Activated B cell treated with CpG ODN at 0.5 μM for 24 hours (primary cell): ENCODE measurements at regions of chr7 and their contacts with region 1.

Region 1: GRCh38 chr7:103344453-103345149 is at the start of gene DNAJC2:
- DNase-seq: peak; percentile 65
- ATAC-seq: peak; percentile 90
- H3K4me3 Mint-ChIP-seq: peak within 1 kb of the TSS; percentile 99
- H3K27ac Mint-ChIP-seq: peak within 1 kb of the TSS; percentile 94
- H3K4me1 Mint-ChIP-seq: peaks cover 60% of the 10 kb centered on the region
- H3K27me3 Mint-ChIP-seq: no peaks in the 10 kb centered on the region
- CTCF ChIP-seq: no peak
- total RNA-seq, gene DNAJC2: 45.8 and 49.0 TPM in 2 replicates

Region 2: GRCh38 chr7:103074519-103075336 is 269.9 kb before region 1 on chr7 and contains the starts of genes ARMC10 and FBXL13:
- CTCF ChIA-PET with region 1: no interaction called
- POLR2A ChIA-PET with region 1: no interaction called
- intact Hi-C with region 1: loop called (anchors 10 kb)
- DNase-seq: peak; percentile 95
- ATAC-seq: peak; percentile 85
- H3K4me3 Mint-ChIP-seq: peak within 1 kb of the TSS; percentile 94
- H3K27ac Mint-ChIP-seq: peak within 1 kb of the TSS; percentile 95
- H3K4me1 Mint-ChIP-seq: peaks cover 41% of the 10 kb centered on the region
- H3K27me3 Mint-ChIP-seq: no peaks in the 10 kb centered on the region
- CTCF ChIP-seq: no peak
- total RNA-seq, gene ARMC10: 24.9 and 26.7 TPM in 2 replicates
- total RNA-seq, gene FBXL13: 2.9 and 3.4 TPM in 2 replicates

Region 3: DNA sequence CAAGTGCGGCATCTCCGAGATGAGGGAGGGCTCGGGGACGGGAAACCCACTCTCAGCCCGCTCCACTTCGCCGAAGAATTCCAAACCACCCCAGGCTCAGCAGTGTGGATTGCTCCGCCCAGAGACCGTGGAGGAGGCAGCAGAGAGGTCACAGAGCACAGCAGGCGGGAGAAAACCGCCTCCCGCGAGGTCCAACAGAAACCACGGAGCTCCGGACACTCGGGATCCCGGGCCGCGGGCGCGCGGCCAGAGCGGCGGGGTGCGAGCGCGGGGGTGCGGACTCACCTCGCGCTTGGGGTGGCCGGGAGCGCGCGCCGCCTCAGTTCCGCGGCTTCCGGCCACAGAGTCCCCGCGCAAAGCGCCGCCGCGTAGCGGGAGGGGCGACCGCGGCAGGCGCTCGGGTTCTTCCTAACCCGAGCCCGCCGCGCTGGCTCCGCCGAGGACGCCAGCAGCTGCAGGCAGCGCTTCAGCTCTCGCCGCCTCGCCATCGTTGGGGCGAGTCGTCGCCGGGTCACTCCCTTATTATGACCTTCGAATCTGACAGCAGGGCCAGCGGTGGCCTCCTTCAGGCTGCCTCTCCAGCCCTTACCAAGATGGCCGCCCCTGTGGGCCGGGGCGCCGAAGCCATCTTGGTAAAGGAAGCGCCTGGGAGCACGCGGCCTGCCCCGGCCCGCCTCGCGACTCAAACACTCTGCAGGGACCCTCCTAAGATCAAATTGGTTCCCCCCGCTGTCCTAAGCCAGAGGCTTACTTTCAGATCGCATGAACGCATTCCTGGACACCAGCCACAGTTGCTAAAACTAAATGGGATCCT is 195.4 kb before region 1 on chr7 and contains the start of gene NAPEPLD:
- CTCF ChIA-PET with region 1: no interaction called
- POLR2A ChIA-PET with region 1: no interaction called
- intact Hi-C with region 1: loop called (anchors 2 kb)
- DNase-seq: peak; percentile 81
- ATAC-seq: peak; percentile 86
- H3K4me3 Mint-ChIP-seq: peak within 1 kb of the TSS; percentile 98
- H3K27ac Mint-ChIP-seq: peak within 1 kb of the TSS; percentile 96
- H3K4me1 Mint-ChIP-seq: peaks cover 40% of the 10 kb centered on the region
- H3K27me3 Mint-ChIP-seq: no peaks in the 10 kb centered on the region
- CTCF ChIP-seq: no peak
- total RNA-seq, gene NAPEPLD: 14.4 and 15.4 TPM in 2 replicates

Region 4: DNA sequence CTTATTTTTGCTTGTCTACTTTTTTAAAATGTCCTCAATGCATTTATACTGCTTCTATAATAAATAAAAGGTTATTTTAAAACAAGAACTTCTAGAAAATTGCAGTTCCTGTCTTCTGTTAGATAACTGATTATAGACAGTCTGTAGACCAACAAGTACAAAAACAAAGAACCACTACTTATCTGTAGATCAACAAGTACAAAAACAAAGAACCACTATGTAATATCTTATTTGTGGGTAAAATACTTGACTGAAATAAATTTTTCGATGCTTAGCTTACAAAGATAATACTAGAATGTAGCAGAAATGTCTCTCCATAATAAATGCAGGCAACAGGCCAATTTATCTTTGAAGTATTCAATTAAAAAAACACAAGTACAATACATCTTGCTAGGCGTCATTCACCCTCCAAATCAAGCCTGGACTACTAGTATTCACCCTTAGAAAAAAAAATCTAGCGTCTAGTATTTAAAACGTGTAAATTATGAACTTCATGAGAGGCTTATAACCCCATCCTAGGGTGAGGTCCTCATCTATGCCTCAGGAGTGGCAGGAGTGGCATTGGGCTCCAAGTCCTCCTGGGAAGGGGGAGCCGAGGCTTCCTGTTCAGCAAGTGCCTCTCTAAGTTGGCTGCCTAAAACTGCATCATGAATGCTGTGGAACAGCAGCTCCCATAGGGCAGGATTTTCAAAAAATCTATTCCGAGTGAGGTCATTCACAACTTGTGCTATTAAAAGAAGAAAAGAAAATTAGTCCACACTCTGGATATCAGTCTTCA is 29.5 kb after region 1 on chr7:
- CTCF ChIA-PET with region 1: no interaction called
- POLR2A ChIA-PET with region 1: no interaction called
- intact Hi-C with region 1: no loop called
- DNase-seq: no peak
- ATAC-seq: no peak
- H3K4me3 Mint-ChIP-seq: no peak overlapping the region
- H3K27ac Mint-ChIP-seq: no peak overlapping the region
- H3K4me1 Mint-ChIP-seq: no peaks in the 10 kb centered on the region
- H3K27me3 Mint-ChIP-seq: peaks cover 4% of the 10 kb centered on the region
- CTCF ChIP-seq: no peak

Region 5: GRCh38 chr7:104207731-104208420 is 863.3 kb after region 1 on chr7 and contains the start of gene ORC5:
- CTCF ChIA-PET with region 1: no interaction called
- POLR2A ChIA-PET with region 1: no interaction called
- intact Hi-C with region 1: loop called (anchors 5 kb)
- DNase-seq: peak; percentile 69
- ATAC-seq: peak; percentile 99
- H3K4me3 Mint-ChIP-seq: peak within 1 kb of the TSS; percentile 95
- H3K27ac Mint-ChIP-seq: peak within 1 kb of the TSS; percentile 90
- H3K4me1 Mint-ChIP-seq: peaks cover 29% of the 10 kb centered on the region
- H3K27me3 Mint-ChIP-seq: peaks cover 14% of the 10 kb centered on the region
- CTCF ChIP-seq: no peak
- total RNA-seq, gene ORC5: 22.1 and 23.0 TPM in 2 replicates